CD4-positive, alpha-beta memory T cell (primary cell): ENCODE measurements at regions of chr10 and their contacts with region 1.

Region 1: GRCh38 chr10:70363971-70364771 is 18.3 kb downstream of the LRRC20 start:
- DNase-seq: peak; percentile 78 to 81 (median 78)
- H3K4me3 ChIP-seq: no peak overlapping the region
- H3K4me3 Mint-ChIP-seq: peak overlapping the region in 5 of 8 donors; percentile 44 to 61 (median 46)
- H3K27ac ChIP-seq: no peak overlapping the region
- H3K27ac Mint-ChIP-seq: peak overlapping the region in 3 of 7 donors; percentile 59 to 84 (median 79)
- H3K4me1 ChIP-seq: peaks cover 10% of the 10 kb centered on the region
- H3K4me1 Mint-ChIP-seq: peaks cover 6 to 15% (median 8%) of the 10 kb centered on the region in 4 donors
- H3K27me3 ChIP-seq: no peaks in the 10 kb centered on the region
- H3K27me3 Mint-ChIP-seq: peaks cover 0 to 1% of the 10 kb centered on the region in 2 donors

Region 2: DNA sequence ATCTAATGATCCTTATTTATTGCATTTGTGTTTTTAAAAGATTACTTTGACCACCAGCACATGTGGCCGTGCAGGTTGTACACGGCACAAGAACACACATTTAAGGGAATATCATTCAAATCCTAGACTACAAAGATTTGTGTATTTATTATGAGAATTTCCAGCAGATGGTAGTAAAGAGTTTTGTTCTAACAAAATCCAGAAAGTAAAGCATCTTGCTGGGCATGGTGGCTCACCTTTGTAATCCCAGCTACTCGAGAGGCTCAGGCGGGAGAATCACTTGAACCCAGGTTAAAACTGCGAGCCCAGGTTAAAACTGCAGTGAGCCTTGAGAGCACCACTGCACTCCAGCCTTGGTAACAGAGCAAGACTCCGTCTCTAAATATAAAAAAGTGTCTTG is 280.0 kb before region 1 on chr10:
- CTCF ChIA-PET with region 1: interaction called, 6 read pairs
- POLR2A ChIA-PET with region 1: no interaction called
- intact Hi-C with region 1: loop called (anchors 10 kb)
- DNase-seq: peak in 3 of 5 donors; percentile 8 to 11 (median 9)
- H3K4me3 ChIP-seq: no peak overlapping the region
- H3K4me3 Mint-ChIP-seq: no peak overlapping the region
- H3K27ac ChIP-seq: no peak overlapping the region
- H3K27ac Mint-ChIP-seq: no peak overlapping the region
- H3K4me1 ChIP-seq: no peaks in the 10 kb centered on the region
- H3K4me1 Mint-ChIP-seq: no peaks in the 10 kb centered on the region
- H3K27me3 ChIP-seq: no peaks in the 10 kb centered on the region
- H3K27me3 Mint-ChIP-seq: no peaks in the 10 kb centered on the region

Region 3: DNA sequence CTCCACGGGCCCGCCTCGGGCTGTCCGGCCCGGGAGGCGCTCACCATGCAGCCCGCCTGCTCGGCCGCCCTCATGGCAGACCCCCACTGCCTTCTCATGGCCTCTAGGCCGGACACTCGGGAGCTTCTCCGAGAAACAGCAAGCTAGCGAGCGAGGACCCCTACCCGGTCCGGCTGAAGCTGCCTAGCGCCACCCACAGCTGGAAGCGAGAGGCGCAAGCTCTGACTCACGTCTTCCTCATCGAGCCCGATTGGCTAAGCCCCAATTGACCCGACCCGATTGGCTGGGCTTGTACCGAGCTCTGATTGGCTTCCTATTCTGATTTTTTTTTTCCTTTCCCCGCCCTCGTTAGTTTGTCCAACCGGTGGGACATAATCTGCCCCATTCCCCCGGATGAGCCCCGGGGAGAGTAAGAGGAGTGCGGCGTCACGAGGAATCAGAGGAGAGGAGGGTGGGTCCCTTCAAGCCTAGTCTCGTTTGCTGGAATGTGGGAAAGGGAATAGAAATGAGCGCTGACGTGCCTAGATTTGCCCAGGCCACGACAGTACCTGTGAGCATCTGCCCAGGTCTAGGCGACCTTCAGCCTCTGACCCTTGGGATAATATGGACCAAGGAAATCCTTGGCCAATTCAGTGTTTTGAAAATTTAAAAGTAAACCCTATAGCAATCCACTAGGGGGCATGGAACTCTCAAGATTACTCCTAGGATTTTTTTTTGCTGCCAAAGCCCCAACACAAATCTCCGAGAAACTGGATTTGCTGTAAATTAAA is 217.5 kb before region 1 on chr10 and contains the start of gene TYSND1:
- CTCF ChIA-PET with region 1: interaction called, 25 read pairs
- POLR2A ChIA-PET with region 1: interaction called, 7 read pairs
- intact Hi-C with region 1: loop called (anchors 1 kb)
- DNase-seq: peak; percentile 90 to 96 (median 91)
- H3K4me3 ChIP-seq: peak within 1 kb of the TSS; percentile 50 to 87
- H3K4me3 Mint-ChIP-seq: peak within 1 kb of the TSS; percentile 90 to 93 (median 91)
- H3K27ac ChIP-seq: peak within 1 kb of the TSS; percentile 78
- H3K27ac Mint-ChIP-seq: peak within 1 kb of the TSS; percentile 92 to 99 (median 98)
- H3K4me1 ChIP-seq: peaks cover 33% of the 10 kb centered on the region
- H3K4me1 Mint-ChIP-seq: peaks cover 13 to 41% (median 32%) of the 10 kb centered on the region in 4 donors
- H3K27me3 ChIP-seq: no peaks in the 10 kb centered on the region
- H3K27me3 Mint-ChIP-seq: no peaks in the 10 kb centered on the region
- total RNA-seq, gene TYSND1: 29.3 to 31.4 TPM

Region 4: DNA sequence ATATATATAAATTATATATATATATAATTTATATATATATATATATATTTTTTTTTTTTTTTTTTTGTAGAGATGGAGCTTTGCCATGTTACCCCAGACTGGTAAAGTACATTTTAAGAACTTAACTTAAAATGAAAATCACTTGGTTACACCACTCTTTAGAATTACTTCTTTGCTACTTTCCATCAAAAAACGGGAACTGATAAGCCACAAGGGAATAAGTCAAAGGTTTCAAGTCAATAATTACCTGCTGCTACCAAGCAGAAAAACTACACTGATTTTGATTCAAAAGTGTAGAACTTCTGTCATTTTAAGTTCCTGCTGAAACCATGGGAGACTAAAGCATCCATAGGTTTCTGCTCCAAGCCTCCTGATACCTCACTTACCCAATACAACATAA is 143.1 kb before region 1 on chr10:
- CTCF ChIA-PET with region 1: interaction called, 558 read pairs
- POLR2A ChIA-PET with region 1: interaction called, 43 read pairs
- intact Hi-C with region 1: loop called (anchors 1 kb)
- DNase-seq: no peak
- H3K4me3 ChIP-seq: no peak overlapping the region
- H3K4me3 Mint-ChIP-seq: peak overlapping the region in 2 of 8 donors; percentile 62 to 64
- H3K27ac ChIP-seq: no peak overlapping the region
- H3K27ac Mint-ChIP-seq: peak overlapping the region in 5 of 7 donors; percentile 7 to 87 (median 65)
- H3K4me1 ChIP-seq: peaks cover 6% of the 10 kb centered on the region
- H3K4me1 Mint-ChIP-seq: peaks cover 12 to 24% (median 16%) of the 10 kb centered on the region in 4 donors
- H3K27me3 ChIP-seq: no peaks in the 10 kb centered on the region
- H3K27me3 Mint-ChIP-seq: no peaks in the 10 kb centered on the region

Region 5: GRCh38 chr10:70233109-70233938 is 130.8 kb before region 1 on chr10 and contains the start of gene PPA1:
- CTCF ChIA-PET with region 1: interaction called, 37 read pairs
- POLR2A ChIA-PET with region 1: interaction called, 6 read pairs
- intact Hi-C with region 1: no loop called
- DNase-seq: peak; percentile 98 to 100 (median 99)
- H3K4me3 ChIP-seq: peak within 1 kb of the TSS; percentile 67 to 77
- H3K4me3 Mint-ChIP-seq: peak within 1 kb of the TSS; percentile 89 to 94 (median 91)
- H3K27ac ChIP-seq: peak within 1 kb of the TSS; percentile 82
- H3K27ac Mint-ChIP-seq: peak within 1 kb of the TSS; percentile 88 to 97 (median 96)
- H3K4me1 ChIP-seq: peaks cover 20% of the 10 kb centered on the region
- H3K4me1 Mint-ChIP-seq: peaks cover 14 to 42% (median 29%) of the 10 kb centered on the region in 4 donors
- H3K27me3 ChIP-seq: no peaks in the 10 kb centered on the region
- H3K27me3 Mint-ChIP-seq: peaks cover 0 to 1% of the 10 kb centered on the region in 2 donors
- total RNA-seq, gene PPA1: 57.4 to 60.4 TPM

Region 6: GRCh38 chr10:70272925-70273316 is 91.2 kb before region 1 on chr10:
- CTCF ChIA-PET with region 1: interaction called, 31 read pairs
- POLR2A ChIA-PET with region 1: no interaction called
- intact Hi-C with region 1: loop called (anchors 2 kb)
- DNase-seq: peak in 4 of 5 donors; percentile 29 to 53 (median 42)
- H3K4me3 ChIP-seq: no peak overlapping the region
- H3K4me3 Mint-ChIP-seq: peak overlapping the region in 7 of 8 donors; percentile 21 to 73 (median 42)
- H3K27ac ChIP-seq: no peak overlapping the region
- H3K27ac Mint-ChIP-seq: peak overlapping the region in 4 of 7 donors; percentile 29 to 86 (median 65)
- H3K4me1 ChIP-seq: peaks cover 7% of the 10 kb centered on the region
- H3K4me1 Mint-ChIP-seq: peaks cover 6 to 9% (median 8%) of the 10 kb centered on the region in 4 donors
- H3K27me3 ChIP-seq: no peaks in the 10 kb centered on the region
- H3K27me3 Mint-ChIP-seq: no peaks in the 10 kb centered on the region

Region 7: DNA sequence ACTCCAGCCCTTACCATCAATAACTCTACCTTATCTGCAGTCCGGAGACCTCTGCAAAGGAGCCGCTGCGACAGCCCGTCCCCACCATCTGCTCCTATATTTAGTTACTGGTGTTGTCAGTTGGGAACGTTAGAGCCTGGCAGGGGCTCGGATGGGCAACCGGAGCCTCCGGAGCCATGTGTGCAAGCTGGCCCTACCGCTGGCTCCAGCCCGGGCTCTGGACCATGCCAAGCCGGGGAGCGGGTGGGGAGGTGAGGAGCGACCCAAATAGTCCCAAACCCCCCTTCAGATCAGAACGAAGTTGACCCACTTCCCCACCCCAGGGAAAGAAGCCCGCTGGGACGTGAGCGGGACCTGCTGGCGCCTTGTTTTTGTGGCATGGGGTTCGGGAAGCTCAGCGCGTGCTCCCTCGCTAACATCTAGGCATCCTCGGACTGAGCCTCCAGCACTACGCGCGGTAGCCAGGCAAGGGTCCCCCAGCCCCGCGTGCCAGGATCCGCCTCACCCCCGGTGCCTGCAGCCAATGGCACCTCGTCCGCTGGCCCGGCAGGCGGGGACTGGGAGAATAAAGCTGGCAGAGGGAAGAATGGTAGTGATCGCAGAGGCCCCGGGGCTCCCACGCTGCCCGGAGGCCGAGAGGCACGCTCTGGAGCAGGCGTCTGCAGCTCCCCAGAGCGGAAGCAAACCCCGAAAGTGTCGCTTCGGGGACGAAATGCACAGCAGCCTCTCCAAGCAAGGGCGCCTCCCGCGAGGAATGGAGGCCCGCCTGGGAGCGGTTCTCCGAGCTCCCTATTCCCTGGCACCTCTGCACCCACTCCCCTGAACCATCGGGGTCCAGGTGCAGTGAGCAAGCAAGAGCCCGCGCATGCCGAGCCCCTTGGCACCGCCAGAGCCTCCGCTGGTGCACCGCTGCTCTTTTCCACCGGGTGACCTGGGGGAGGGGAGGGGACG is 17.6 kb after region 1 on chr10:
- CTCF ChIA-PET with region 1: interaction called, 19 read pairs
- POLR2A ChIA-PET with region 1: no interaction called
- intact Hi-C with region 1: no loop called
- DNase-seq: peak in 1 of 5 donors; percentile 10
- H3K4me3 ChIP-seq: peak overlapping the region; percentile 82 to 88
- H3K4me3 Mint-ChIP-seq: peak overlapping the region; percentile 88 to 92 (median 90)
- H3K27ac ChIP-seq: peak overlapping the region; percentile 16
- H3K27ac Mint-ChIP-seq: peak overlapping the region in 4 of 7 donors; percentile 37 to 70 (median 50)
- H3K4me1 ChIP-seq: peaks cover 13% of the 10 kb centered on the region
- H3K4me1 Mint-ChIP-seq: peaks cover 0 to 14% (median 6%) of the 10 kb centered on the region in 4 donors
- H3K27me3 ChIP-seq: no peaks in the 10 kb centered on the region
- H3K27me3 Mint-ChIP-seq: no peaks in the 10 kb centered on the region

Region 8: GRCh38 chr10:70715853-70716795 is 352.0 kb after region 1 on chr10:
- CTCF ChIA-PET with region 1: no interaction called
- POLR2A ChIA-PET with region 1: no interaction called
- intact Hi-C with region 1: no loop called
- DNase-seq: peak in 1 of 5 donors; percentile 25
- H3K4me3 ChIP-seq: no peak overlapping the region
- H3K4me3 Mint-ChIP-seq: no peak overlapping the region
- H3K27ac ChIP-seq: no peak overlapping the region
- H3K27ac Mint-ChIP-seq: no peak overlapping the region
- H3K4me1 ChIP-seq: no peaks in the 10 kb centered on the region
- H3K4me1 Mint-ChIP-seq: no peaks in the 10 kb centered on the region
- H3K27me3 ChIP-seq: no peaks in the 10 kb centered on the region
- H3K27me3 Mint-ChIP-seq: no peaks in the 10 kb centered on the region